B cell (primary cell): ENCODE measurements at regions of chr1 and their contacts with region 1.

Region 1: GRCh38 chr1:174262349-174263241 is 103.3 kb downstream of the RABGAP1L start:
- DNase-seq: peak; percentile 58
- ATAC-seq: peak; percentile 62
- H3K4me3 ChIP-seq: no peak overlapping the region
- H3K4me3 Mint-ChIP-seq: no peak overlapping the region
- H3K27ac ChIP-seq: no peak overlapping the region
- H3K27ac Mint-ChIP-seq: peak overlapping the region; percentile 67
- H3K4me1 ChIP-seq: peaks cover 4 to 9% of the 10 kb centered on the region in 2 donors
- H3K4me1 Mint-ChIP-seq: peaks cover 20% of the 10 kb centered on the region
- H3K27me3 ChIP-seq: no peaks in the 10 kb centered on the region
- H3K27me3 Mint-ChIP-seq: no peaks in the 10 kb centered on the region
- CTCF ChIP-seq: peak; percentile 81

Region 2: GRCh38 chr1:174204697-174205308 is 57.8 kb before region 1 on chr1:
- CTCF ChIA-PET with region 1: no interaction called
- POLR2A ChIA-PET with region 1: no interaction called
- intact Hi-C with region 1: no loop called
- DNase-seq: peak; percentile 38
- ATAC-seq: peak; percentile 17
- H3K4me3 ChIP-seq: no peak overlapping the region
- H3K4me3 Mint-ChIP-seq: peak overlapping the region; percentile 40
- H3K27ac ChIP-seq: peak overlapping the region in 1 of 2 donors; percentile 35
- H3K27ac Mint-ChIP-seq: peak overlapping the region; percentile 61
- H3K4me1 ChIP-seq: peaks cover 17 to 22% of the 10 kb centered on the region in 2 donors
- H3K4me1 Mint-ChIP-seq: peaks cover 54% of the 10 kb centered on the region
- H3K27me3 ChIP-seq: no peaks in the 10 kb centered on the region
- H3K27me3 Mint-ChIP-seq: no peaks in the 10 kb centered on the region
- CTCF ChIP-seq: no peak

Region 3: GRCh38 chr1:174276087-174276486 is 13.5 kb after region 1 on chr1:
- CTCF ChIA-PET with region 1: interaction called, 27 read pairs
- POLR2A ChIA-PET with region 1: no interaction called
- intact Hi-C with region 1: no loop called
- DNase-seq: peak; percentile 7
- ATAC-seq: peak; percentile 10
- H3K4me3 ChIP-seq: no peak overlapping the region
- H3K4me3 Mint-ChIP-seq: no peak overlapping the region
- H3K27ac ChIP-seq: no peak overlapping the region
- H3K27ac Mint-ChIP-seq: no peak overlapping the region
- H3K4me1 ChIP-seq: peaks cover 14 to 24% of the 10 kb centered on the region in 2 donors
- H3K4me1 Mint-ChIP-seq: peaks cover 39% of the 10 kb centered on the region
- H3K27me3 ChIP-seq: no peaks in the 10 kb centered on the region
- H3K27me3 Mint-ChIP-seq: no peaks in the 10 kb centered on the region
- CTCF ChIP-seq: no peak

Region 4: GRCh38 chr1:174550296-174550695 is 287.7 kb after region 1 on chr1:
- CTCF ChIA-PET with region 1: no interaction called
- POLR2A ChIA-PET with region 1: no interaction called
- intact Hi-C with region 1: loop called (anchors 10 kb)
- DNase-seq: no peak
- ATAC-seq: no peak
- H3K4me3 ChIP-seq: no peak overlapping the region
- H3K4me3 Mint-ChIP-seq: no peak overlapping the region
- H3K27ac ChIP-seq: no peak overlapping the region
- H3K27ac Mint-ChIP-seq: no peak overlapping the region
- H3K4me1 ChIP-seq: peaks cover 0 to 4% of the 10 kb centered on the region in 2 donors
- H3K4me1 Mint-ChIP-seq: peaks cover 26% of the 10 kb centered on the region
- H3K27me3 ChIP-seq: no peaks in the 10 kb centered on the region
- H3K27me3 Mint-ChIP-seq: no peaks in the 10 kb centered on the region
- CTCF ChIP-seq: no peak

Region 5: DNA sequence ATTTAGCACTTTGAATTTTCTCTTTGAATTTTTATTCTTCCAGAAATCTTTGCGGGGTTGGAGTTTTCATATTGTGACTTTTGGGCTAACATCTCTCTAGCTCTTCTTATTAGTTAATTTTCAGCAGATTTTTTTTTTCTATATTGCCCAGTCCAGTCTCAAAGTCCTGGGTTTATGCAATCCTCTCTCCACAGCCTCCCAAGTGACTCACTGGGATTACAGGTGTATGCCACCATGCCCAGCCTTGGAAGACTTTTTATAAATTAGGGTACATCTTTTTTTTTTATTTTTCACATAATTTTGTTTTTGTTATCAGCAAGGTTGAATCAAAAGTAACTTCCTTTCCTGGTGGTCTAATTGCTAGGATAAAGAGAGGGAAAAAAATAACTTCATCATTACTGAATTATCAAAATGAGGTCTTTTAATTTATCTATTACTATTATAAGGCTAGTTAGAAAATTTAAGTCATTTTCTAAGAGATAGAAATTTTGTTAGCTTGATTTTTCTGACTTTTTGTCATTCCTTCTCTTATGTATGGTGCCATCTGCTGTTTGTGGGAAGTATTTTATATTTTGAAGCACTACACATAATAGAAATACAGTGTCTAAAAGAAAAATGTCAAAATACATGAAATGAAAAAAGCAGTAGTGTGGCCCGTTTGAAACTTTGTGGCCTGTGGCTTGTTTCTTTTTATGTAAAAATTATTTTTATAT is 463.7 kb after region 1 on chr1:
- CTCF ChIA-PET with region 1: interaction called, 64 read pairs
- POLR2A ChIA-PET with region 1: no interaction called
- intact Hi-C with region 1: loop called (anchors 1 kb)
- DNase-seq: peak; percentile 27
- ATAC-seq: no peak
- H3K4me3 ChIP-seq: no peak overlapping the region
- H3K4me3 Mint-ChIP-seq: no peak overlapping the region
- H3K27ac ChIP-seq: no peak overlapping the region
- H3K27ac Mint-ChIP-seq: no peak overlapping the region
- H3K4me1 ChIP-seq: no peaks in the 10 kb centered on the region
- H3K4me1 Mint-ChIP-seq: peaks cover 5% of the 10 kb centered on the region
- H3K27me3 ChIP-seq: no peaks in the 10 kb centered on the region
- H3K27me3 Mint-ChIP-seq: no peaks in the 10 kb centered on the region
- CTCF ChIP-seq: peak; percentile 77

Region 6: GRCh38 chr1:174743654-174744561 is 481.3 kb after region 1 on chr1:
- CTCF ChIA-PET with region 1: interaction called, 109 read pairs
- POLR2A ChIA-PET with region 1: interaction called, 3 read pairs
- intact Hi-C with region 1: loop called (anchors 1 kb)
- DNase-seq: peak; percentile 65
- ATAC-seq: peak; percentile 57
- H3K4me3 ChIP-seq: no peak overlapping the region
- H3K4me3 Mint-ChIP-seq: no peak overlapping the region
- H3K27ac ChIP-seq: no peak overlapping the region
- H3K27ac Mint-ChIP-seq: no peak overlapping the region
- H3K4me1 ChIP-seq: peaks cover 0 to 10% of the 10 kb centered on the region in 2 donors
- H3K4me1 Mint-ChIP-seq: peaks cover 36% of the 10 kb centered on the region
- H3K27me3 ChIP-seq: no peaks in the 10 kb centered on the region
- H3K27me3 Mint-ChIP-seq: no peaks in the 10 kb centered on the region
- CTCF ChIP-seq: peak; percentile 84

Region 7: DNA sequence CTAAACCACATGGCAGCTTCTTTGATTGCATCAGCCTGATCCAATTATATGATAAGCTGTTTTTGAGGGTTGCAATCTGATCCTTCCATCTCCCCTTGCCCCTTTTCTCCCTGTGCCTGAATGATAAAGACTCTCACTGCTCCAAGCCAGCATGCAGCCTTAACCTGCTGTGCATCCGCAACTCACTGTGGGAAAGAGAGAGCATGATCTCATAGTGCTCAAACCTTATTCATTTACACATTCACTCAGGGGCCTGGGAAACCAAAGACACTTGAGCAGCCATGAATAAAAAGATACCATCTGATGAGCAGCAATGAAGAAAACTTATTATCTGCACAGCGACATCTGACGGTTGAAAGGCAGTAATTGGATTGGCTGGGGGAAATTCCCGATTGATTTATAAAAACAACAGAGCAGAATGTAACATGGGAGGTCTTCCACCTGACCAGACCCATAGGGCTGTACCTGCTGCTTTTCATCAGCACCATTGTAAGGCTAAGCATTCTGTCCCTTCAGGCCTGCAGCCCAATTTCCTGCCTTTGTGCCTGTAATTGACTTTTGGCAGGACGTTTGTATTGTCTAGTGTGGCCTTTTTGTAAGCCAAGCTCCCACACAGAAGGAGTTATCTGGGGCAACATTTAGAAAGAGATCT is 867.5 kb after region 1 on chr1:
- CTCF ChIA-PET with region 1: interaction called, 8 read pairs
- POLR2A ChIA-PET with region 1: no interaction called
- intact Hi-C with region 1: loop called (anchors 5 kb)
- DNase-seq: no peak
- ATAC-seq: no peak
- H3K4me3 ChIP-seq: no peak overlapping the region
- H3K4me3 Mint-ChIP-seq: no peak overlapping the region
- H3K27ac ChIP-seq: no peak overlapping the region
- H3K27ac Mint-ChIP-seq: no peak overlapping the region
- H3K4me1 ChIP-seq: peaks cover 0 to 2% of the 10 kb centered on the region in 2 donors
- H3K4me1 Mint-ChIP-seq: peaks cover 6% of the 10 kb centered on the region
- H3K27me3 ChIP-seq: no peaks in the 10 kb centered on the region
- H3K27me3 Mint-ChIP-seq: peaks cover 5% of the 10 kb centered on the region
- CTCF ChIP-seq: no peak